Calu3 (cell line): ENCODE measurements at regions of chr7 and their contacts with region 1.

Region 1: GRCh38 chr7:20219446-20220292 is 2.5 kb upstream of the MACC1 start:
- DNase-seq: peak; percentile 98
- H3K4me3 Mint-ChIP-seq: peak overlapping the region; percentile 73
- H3K27ac Mint-ChIP-seq: peak overlapping the region; percentile 95
- H3K4me1 Mint-ChIP-seq: peaks cover 61% of the 10 kb centered on the region
- H3K27me3 Mint-ChIP-seq: no peaks in the 10 kb centered on the region
- CTCF ChIP-seq: no peak

Region 2: DNA sequence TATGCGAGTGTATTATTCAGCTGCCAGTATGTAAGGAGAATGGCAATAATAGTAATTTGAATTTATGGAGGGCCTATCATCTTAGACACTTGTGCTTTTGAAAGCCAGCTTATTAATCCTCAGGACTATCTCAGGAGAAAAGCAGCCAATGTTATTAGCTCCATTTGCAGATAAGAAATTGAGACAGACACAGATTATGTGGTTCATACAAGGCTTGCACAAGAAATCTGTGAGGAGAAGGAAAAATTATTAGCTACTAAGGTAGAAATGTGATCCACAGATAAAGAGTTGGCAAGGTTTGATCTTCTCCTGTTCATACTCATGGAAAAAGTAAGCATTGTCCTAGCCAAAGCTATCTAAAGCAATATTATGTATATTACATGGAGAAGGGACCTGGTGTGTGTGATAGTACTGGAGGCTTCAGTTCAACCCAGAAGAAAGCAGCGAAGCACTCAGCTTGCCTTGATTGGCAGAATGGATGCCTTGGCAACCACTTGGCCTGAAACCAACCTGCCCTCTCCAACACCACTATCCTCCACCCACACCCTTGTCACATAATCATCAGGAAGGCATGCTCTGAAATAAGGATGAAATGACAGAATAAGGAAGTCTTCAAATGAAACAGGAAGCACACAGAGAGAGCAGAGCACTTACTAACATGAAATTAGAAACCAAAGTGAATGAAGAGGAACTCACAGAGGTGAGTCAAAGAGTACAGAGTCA is 20.5 kb before region 1 on chr7:
- CTCF ChIA-PET with region 1: interaction called, 7 read pairs
- intact Hi-C with region 1: loop called (anchors 1 kb)
- DNase-seq: peak; percentile 93
- H3K4me3 Mint-ChIP-seq: peak overlapping the region; percentile 37
- H3K27ac Mint-ChIP-seq: peak overlapping the region; percentile 79
- H3K4me1 Mint-ChIP-seq: peaks cover 73% of the 10 kb centered on the region
- H3K27me3 Mint-ChIP-seq: no peaks in the 10 kb centered on the region
- CTCF ChIP-seq: no peak

Region 3: DNA sequence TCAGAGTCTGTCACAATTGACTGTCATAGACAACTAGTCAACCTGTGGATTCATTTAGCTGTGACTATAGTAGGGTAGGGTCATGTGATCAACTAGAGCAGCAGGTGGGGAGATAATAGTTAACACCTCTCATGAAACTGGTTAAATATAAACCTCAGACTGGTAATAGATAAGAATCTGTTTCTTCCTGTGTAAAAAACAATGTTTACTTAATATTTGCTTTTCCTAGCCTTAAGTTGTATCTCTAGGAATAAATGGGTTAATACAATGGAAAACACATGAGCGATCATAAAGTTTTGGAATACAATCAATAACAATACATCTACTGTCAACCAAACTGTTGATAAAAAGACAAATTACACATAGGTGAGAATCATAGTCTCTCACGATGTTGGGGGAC is 67.6 kb after region 1 on chr7:
- CTCF ChIA-PET with region 1: interaction called, 5 read pairs
- intact Hi-C with region 1: loop called (anchors 1 kb)
- DNase-seq: no peak
- H3K4me3 Mint-ChIP-seq: peak overlapping the region; percentile 20
- H3K27ac Mint-ChIP-seq: peak overlapping the region; percentile 73
- H3K4me1 Mint-ChIP-seq: peaks cover 72% of the 10 kb centered on the region
- H3K27me3 Mint-ChIP-seq: no peaks in the 10 kb centered on the region
- CTCF ChIP-seq: no peak

Region 4: GRCh38 chr7:20310963-20311742 is 91.5 kb after region 1 on chr7:
- CTCF ChIA-PET with region 1: interaction called, 12 read pairs
- intact Hi-C with region 1: loop called (anchors 1 kb)
- DNase-seq: peak; percentile 50
- H3K4me3 Mint-ChIP-seq: no peak overlapping the region
- H3K27ac Mint-ChIP-seq: peak overlapping the region; percentile 30
- H3K4me1 Mint-ChIP-seq: peaks cover 42% of the 10 kb centered on the region
- H3K27me3 Mint-ChIP-seq: no peaks in the 10 kb centered on the region
- CTCF ChIP-seq: peak; percentile 71

Region 5: GRCh38 chr7:20330240-20330927 is 110.7 kb after region 1 on chr7 and contains the start of gene ITGB8:
- CTCF ChIA-PET with region 1: interaction called, 6 read pairs
- intact Hi-C with region 1: loop called (anchors 1 kb)
- DNase-seq: peak; percentile 93
- H3K4me3 Mint-ChIP-seq: peak within 1 kb of the TSS; percentile 93
- H3K27ac Mint-ChIP-seq: peak within 1 kb of the TSS; percentile 98
- H3K4me1 Mint-ChIP-seq: peaks cover 21% of the 10 kb centered on the region
- H3K27me3 Mint-ChIP-seq: no peaks in the 10 kb centered on the region
- CTCF ChIP-seq: no peak
- total RNA-seq, gene ITGB8: 157 and 183 TPM in 2 replicates

Region 6: DNA sequence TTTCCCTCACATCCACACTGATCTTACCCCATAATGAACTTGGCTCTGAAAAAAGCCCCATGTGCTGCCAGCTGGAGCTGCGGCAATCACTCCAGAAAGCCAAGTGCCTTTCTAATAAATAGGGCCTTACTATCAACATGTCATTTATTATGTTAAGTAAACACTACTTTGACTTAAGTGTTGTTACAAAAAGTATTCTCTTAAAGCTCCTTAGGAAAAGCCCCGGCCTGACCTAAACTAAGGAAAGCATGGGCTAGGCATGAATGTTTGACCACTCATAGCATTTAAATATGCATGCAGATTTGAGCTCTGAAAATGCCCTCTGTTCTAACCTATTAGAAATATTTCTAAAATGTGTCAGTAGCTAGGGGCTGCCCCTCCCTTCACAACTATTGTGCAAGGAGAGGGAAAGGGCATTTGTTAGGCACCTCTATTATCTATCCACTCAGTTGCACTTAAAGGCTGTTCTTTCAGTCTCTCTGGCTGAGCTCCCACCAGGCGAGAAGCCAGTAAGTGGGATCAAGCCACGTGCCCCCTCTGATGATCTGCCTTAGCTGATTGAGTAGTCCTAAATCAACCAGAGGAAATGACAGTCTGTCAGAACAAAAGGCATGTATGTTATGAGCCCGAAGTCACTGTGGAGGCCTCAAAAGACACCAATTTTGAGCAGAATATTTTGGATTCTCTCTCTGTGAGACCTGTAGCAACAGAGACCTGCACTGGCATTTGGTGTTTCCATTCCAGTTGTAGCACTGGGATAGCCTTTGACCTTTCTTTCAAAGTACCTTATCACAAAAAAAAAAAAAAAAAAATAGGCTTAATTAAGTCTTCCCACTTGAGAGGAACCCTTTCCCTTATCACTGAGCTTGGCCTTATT is 188.2 kb after region 1 on chr7:
- CTCF ChIA-PET with region 1: no interaction called
- intact Hi-C with region 1: loop called (anchors 5 kb)
- DNase-seq: peak; percentile 77
- H3K4me3 Mint-ChIP-seq: peak overlapping the region; percentile 22
- H3K27ac Mint-ChIP-seq: peak overlapping the region; percentile 83
- H3K4me1 Mint-ChIP-seq: peaks cover 52% of the 10 kb centered on the region
- H3K27me3 Mint-ChIP-seq: no peaks in the 10 kb centered on the region
- CTCF ChIP-seq: no peak

Region 7: GRCh38 chr7:20560325-20561180 is 340.9 kb after region 1 on chr7:
- CTCF ChIA-PET with region 1: no interaction called
- intact Hi-C with region 1: loop called (anchors 5 kb)
- DNase-seq: no peak
- H3K4me3 Mint-ChIP-seq: no peak overlapping the region
- H3K27ac Mint-ChIP-seq: peak overlapping the region; percentile 97
- H3K4me1 Mint-ChIP-seq: peaks cover 42% of the 10 kb centered on the region
- H3K27me3 Mint-ChIP-seq: no peaks in the 10 kb centered on the region
- CTCF ChIP-seq: no peak